ENCODE measurements at regions of chr9 and their contacts with region 1.

Region 1: DNA sequence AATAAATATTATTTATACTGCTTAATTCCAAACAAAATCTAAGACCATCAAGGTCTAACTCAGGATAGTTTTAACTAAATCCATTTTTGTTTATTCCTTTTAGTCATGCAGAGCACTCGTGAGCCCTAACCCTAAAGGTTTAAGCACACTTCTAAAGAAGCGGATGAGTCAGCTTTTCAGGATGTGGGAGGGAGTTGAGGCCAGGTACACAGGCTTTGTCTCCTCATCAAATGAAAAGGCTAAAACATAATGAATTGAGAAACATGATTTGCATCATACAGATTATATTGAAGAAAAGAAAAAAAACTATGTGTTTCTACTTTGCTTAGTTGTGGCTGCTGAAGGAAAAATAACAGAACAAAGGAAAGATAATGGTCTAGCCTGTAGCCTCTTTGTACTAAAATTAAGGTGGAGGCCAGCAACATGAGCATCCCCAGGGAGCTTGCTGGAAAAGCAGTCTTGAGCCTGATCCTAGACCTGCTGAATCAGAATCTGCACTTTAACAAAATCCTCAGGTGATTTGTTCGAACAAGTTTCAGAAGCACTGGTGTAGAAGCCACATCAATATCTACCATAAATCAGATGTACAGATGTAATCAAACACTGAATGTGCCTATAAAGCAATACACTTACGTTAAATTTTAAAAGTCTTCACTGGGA is 21.1 kb upstream of the ISCA1 start:
- DNase-seq: peak; percentile 53
- ATAC-seq: no peak
- H3K4me3 ChIP-seq: no peak overlapping the region
- H3K27ac ChIP-seq: no peak overlapping the region
- H3K4me1 ChIP-seq: peaks cover 4% of the 10 kb centered on the region
- H3K27me3 ChIP-seq: no peaks in the 10 kb centered on the region
- CTCF ChIP-seq: no peak
- POLR2A ChIP-seq: no peak
- RAD21 ChIP-seq: no peak

Region 2: GRCh38 chr9:85716031-85716877 is 587.2 kb before region 1 on chr9:
- CTCF ChIA-PET with region 1: no interaction called
- POLR2A ChIA-PET with region 1: no interaction called
- dilution Hi-C with region 1: no loop called
- in situ Hi-C with region 1: no loop called
- intact Hi-C with region 1: no loop called
- DNase-seq: no peak
- ATAC-seq: no peak
- H3K4me3 ChIP-seq: no peak overlapping the region
- H3K27ac ChIP-seq: no peak overlapping the region
- H3K4me1 ChIP-seq: no peaks in the 10 kb centered on the region
- H3K27me3 ChIP-seq: no peaks in the 10 kb centered on the region
- CTCF ChIP-seq: no peak
- POLR2A ChIP-seq: no peak
- RAD21 ChIP-seq: no peak

Region 3: GRCh38 chr9:86337469-86338108 is 34.1 kb after region 1 on chr9:
- CTCF ChIA-PET with region 1: no interaction called
- POLR2A ChIA-PET with region 1: no interaction called
- dilution Hi-C with region 1: no loop called
- in situ Hi-C with region 1: no loop called
- intact Hi-C with region 1: loop called (anchors 5 kb)
- DNase-seq: no peak
- ATAC-seq: no peak
- H3K4me3 ChIP-seq: no peak overlapping the region
- H3K27ac ChIP-seq: no peak overlapping the region
- H3K4me1 ChIP-seq: peaks cover 5% of the 10 kb centered on the region
- H3K27me3 ChIP-seq: no peaks in the 10 kb centered on the region
- CTCF ChIP-seq: no peak
- POLR2A ChIP-seq: no peak
- RAD21 ChIP-seq: no peak

Measured in IMR-90 (cell line).